ENCODE measurements at regions of chr19 and their contacts with region 1.

Region 1: DNA sequence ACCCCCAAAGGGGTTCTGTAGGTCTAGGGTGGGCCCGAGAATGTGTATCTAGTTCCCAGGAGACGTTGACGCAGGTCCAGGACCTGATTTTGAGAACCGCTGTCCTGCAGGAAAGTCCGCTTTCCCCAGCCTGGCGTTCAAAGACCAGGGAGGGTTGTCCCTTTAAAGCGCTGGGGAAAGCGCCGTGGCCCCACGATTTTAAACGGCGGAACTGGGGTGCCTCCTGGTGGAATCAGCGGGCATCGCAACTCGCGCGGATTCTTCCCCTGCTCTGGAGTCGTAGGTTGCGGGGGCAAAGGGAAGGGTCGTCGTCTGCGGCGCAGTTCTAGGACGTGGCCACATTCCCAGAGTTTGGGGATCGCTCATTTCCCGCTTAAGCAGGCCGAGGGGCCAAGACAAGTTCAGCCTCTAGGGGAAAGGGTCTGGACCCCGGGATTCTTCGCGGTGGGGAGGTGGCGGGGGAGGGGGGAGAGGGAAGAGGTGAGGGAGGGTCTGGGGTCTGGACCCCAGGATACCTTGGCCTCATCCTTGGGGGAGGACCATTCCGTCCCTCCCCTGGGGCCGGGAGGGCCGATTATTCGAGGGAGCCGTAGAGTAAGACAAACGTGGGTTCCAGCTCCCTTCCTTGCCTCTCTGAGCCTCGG is 7.7 kb downstream of the PNMA8B start:
- DNase-seq: peak; percentile 94
- H3K4me3 Mint-ChIP-seq: no peak overlapping the region
- H3K27ac Mint-ChIP-seq: no peak overlapping the region
- H3K4me1 Mint-ChIP-seq: peaks cover 4% of the 10 kb centered on the region
- H3K27me3 Mint-ChIP-seq: peaks cover 67% of the 10 kb centered on the region

Region 2: DNA sequence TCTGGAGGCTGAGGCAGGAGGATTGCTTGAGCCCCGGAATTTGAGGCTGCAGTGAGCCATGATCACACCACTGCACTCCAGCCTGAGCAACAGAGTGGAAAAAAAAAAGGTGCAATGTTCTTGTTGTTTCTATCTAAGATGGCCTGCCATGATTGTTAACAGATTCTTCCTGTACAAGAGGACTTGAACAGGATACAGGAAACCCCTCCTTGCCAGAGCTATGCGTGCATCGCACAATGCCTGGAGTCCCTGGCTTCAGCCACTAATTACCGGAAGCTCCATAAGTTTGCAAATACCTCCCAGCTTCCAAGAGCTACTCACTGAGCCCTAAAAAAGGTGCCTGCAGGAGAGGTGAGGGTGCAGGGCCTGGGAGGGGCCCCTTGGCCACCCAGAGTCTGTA is 204.2 kb before region 1 on chr19:
- intact Hi-C with region 1: loop called (anchors 2 kb)
- DNase-seq: no peak
- H3K4me3 Mint-ChIP-seq: no peak overlapping the region
- H3K27ac Mint-ChIP-seq: no peak overlapping the region
- H3K4me1 Mint-ChIP-seq: no peaks in the 10 kb centered on the region
- H3K27me3 Mint-ChIP-seq: peaks cover 7% of the 10 kb centered on the region

Region 3: GRCh38 chr19:46373421-46374359 is 114.2 kb before region 1 on chr19:
- intact Hi-C with region 1: no loop called
- DNase-seq: no peak
- H3K4me3 Mint-ChIP-seq: no peak overlapping the region
- H3K27ac Mint-ChIP-seq: no peak overlapping the region
- H3K4me1 Mint-ChIP-seq: peaks cover 20% of the 10 kb centered on the region
- H3K27me3 Mint-ChIP-seq: no peaks in the 10 kb centered on the region

Region 4: DNA sequence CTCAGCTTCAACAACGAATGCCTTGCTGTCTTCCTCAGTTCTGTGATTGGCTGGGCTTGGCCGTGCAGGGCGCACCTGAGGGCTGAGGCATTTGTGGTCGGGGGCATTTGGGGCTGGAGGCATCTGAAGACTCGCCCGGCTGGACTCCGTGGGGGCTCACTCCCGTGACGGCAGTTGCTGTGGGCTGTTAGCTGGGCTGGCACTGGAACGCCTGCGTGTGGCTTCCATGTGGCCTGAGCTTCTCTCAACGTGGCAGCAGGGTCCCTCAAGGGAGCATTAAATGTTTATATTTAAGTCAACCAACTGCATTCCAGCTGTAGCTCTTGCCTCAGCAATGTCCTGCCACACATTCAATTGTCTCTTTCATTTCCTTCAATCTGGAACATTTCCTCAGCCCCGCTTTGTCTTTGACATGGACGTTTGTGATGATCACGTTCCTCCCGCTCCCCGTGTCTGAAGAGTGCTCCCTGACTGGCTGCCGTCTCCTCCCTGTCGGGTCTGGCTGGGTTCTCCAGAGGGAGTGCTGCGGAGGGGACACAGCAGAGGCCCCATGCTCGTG is 95.6 kb before region 1 on chr19:
- intact Hi-C with region 1: loop called (anchors 1 kb)
- DNase-seq: no peak
- H3K4me3 Mint-ChIP-seq: no peak overlapping the region
- H3K27ac Mint-ChIP-seq: peak overlapping the region; percentile 1
- H3K4me1 Mint-ChIP-seq: peaks cover 2% of the 10 kb centered on the region
- H3K27me3 Mint-ChIP-seq: peaks cover under 1% of the 10 kb centered on the region

Region 5: DNA sequence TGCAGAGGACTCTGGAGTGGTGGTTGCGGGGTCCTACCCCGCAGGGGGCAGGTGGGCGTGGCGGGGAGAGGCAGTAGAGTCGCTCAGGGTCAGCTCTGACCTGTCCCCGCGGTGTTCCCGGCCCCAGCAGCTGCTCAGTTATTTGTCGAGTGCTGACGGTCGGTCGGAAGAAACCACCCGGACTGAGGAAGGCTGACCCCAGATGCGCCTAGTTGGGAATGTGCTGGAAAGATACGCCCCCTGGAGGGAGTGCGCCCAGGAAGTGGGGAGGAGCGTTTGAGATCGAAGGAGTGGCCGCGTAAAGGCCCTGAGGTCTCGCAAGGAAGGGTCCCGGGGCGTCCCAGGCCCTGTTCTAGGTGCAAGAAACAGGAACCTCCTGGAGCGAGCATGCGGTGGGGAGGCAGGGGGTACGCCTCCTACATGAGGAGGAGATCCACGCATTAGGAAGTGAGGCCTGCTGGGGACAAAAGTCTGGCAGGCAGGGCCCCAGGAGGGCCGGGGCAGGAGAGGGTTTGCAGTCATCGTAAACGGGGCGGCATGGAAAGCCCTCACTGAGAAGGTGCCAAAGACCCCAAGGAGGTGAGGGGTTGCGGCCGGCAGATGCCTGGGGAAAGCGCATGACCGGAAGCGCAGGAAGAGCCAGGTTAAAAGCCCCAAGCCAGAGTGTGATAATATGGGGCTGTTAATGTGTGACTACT is 83.7 kb before region 1 on chr19:
- intact Hi-C with region 1: loop called (anchors 1 kb)
- DNase-seq: no peak
- H3K4me3 Mint-ChIP-seq: peak overlapping the region; percentile 37
- H3K27ac Mint-ChIP-seq: no peak overlapping the region
- H3K4me1 Mint-ChIP-seq: peaks cover 12% of the 10 kb centered on the region
- H3K27me3 Mint-ChIP-seq: peaks cover 58% of the 10 kb centered on the region

Measured in activated CD4-positive, alpha-beta T cell treated with anti-CD3 and anti-CD28 coated beads, Interleukin-2, amount 10 ng/mL, durations not matched to agents 24 days and 14 days (primary cell).